ENCODE measurements at regions of chr17 and their contacts with region 1.

Region 1: GRCh38 chr17:79658811-79659207 is 48.0 kb upstream of the RBFOX3 start:
- DNase-seq: peak; percentile 63
- ATAC-seq: peak; percentile 99
- H3K4me3 Mint-ChIP-seq: peak overlapping the region; percentile 31
- H3K27ac Mint-ChIP-seq: no peak overlapping the region
- H3K4me1 Mint-ChIP-seq: peaks cover 31% of the 10 kb centered on the region
- H3K27me3 Mint-ChIP-seq: peaks cover 14% of the 10 kb centered on the region
- CTCF ChIP-seq: peak; percentile 41; the same call in 1 of the 2 replicates

Region 2: GRCh38 chr17:79539944-79540705 is 118.7 kb before region 1 on chr17:
- CTCF ChIA-PET with region 1: no interaction called
- POLR2A ChIA-PET with region 1: no interaction called
- DNase-seq: no peak
- ATAC-seq: no peak
- H3K4me3 Mint-ChIP-seq: no peak overlapping the region
- H3K27ac Mint-ChIP-seq: no peak overlapping the region
- H3K4me1 Mint-ChIP-seq: no peaks in the 10 kb centered on the region
- H3K27me3 Mint-ChIP-seq: peaks cover 2% of the 10 kb centered on the region; the same call in 1 of the 2 replicates
- CTCF ChIP-seq: no peak

Region 3: GRCh38 chr17:79612468-79613194 is 46.2 kb before region 1 on chr17:
- CTCF ChIA-PET with region 1: interaction called, 24 read pairs
- POLR2A ChIA-PET with region 1: no interaction called
- DNase-seq: peak; percentile 93
- ATAC-seq: peak; percentile 40
- H3K4me3 Mint-ChIP-seq: no peak overlapping the region
- H3K27ac Mint-ChIP-seq: no peak overlapping the region
- H3K4me1 Mint-ChIP-seq: peaks cover 12% of the 10 kb centered on the region
- H3K27me3 Mint-ChIP-seq: peaks cover 61% of the 10 kb centered on the region
- CTCF ChIP-seq: peak; percentile 80

Region 4: GRCh38 chr17:79670537-79671084 is 11.8 kb after region 1 on chr17:
- CTCF ChIA-PET with region 1: interaction called, 12 read pairs
- POLR2A ChIA-PET with region 1: no interaction called
- DNase-seq: no peak
- ATAC-seq: no peak
- H3K4me3 Mint-ChIP-seq: no peak overlapping the region
- H3K27ac Mint-ChIP-seq: no peak overlapping the region
- H3K4me1 Mint-ChIP-seq: peaks cover 20% of the 10 kb centered on the region
- H3K27me3 Mint-ChIP-seq: peaks cover 6% of the 10 kb centered on the region
- CTCF ChIP-seq: no peak

Region 5: DNA sequence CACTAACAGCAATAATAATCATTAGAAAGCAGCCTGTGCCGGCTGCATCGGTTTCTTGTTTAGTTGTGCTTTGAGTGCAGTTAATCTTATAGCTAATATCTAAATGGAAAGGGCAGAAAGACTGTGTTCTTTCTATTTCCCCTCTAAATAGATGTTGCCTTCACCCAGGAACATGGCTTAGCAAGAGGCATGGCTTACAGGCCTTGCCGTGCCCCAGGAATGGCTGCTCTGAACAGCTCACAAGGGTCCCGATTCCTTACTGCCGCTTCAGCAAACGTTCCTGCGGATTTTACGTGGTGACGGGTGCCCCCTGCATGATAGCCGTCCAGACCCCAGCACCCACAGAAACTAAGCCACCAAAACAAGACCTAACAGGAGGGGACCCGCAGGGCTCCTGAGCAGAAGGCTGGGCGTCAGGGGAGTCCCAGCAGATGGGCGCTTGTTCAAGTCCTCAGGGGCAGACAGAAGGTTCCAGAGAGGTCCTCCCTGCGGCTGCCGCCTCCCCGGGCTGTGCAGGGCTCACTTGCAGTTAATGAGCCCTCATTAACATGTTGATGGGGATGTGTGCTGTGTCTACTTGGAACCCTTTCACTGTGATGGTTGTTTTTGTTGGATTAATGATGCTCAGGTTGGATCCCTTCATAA is 19.4 kb after region 1 on chr17:
- CTCF ChIA-PET with region 1: interaction called, 10 read pairs
- POLR2A ChIA-PET with region 1: no interaction called
- DNase-seq: no peak
- ATAC-seq: peak; percentile 56
- H3K4me3 Mint-ChIP-seq: no peak overlapping the region
- H3K27ac Mint-ChIP-seq: no peak overlapping the region; the same call in 1 of the 2 replicates
- H3K4me1 Mint-ChIP-seq: peaks cover 5% of the 10 kb centered on the region; the same call in 1 of the 2 replicates
- H3K27me3 Mint-ChIP-seq: peaks cover 4% of the 10 kb centered on the region; the same call in 1 of the 2 replicates
- CTCF ChIP-seq: no peak

Region 6: GRCh38 chr17:79695797-79696609 is 37.2 kb after region 1 on chr17:
- CTCF ChIA-PET with region 1: interaction called, 10 read pairs
- POLR2A ChIA-PET with region 1: no interaction called
- DNase-seq: no peak
- ATAC-seq: no peak
- H3K4me3 Mint-ChIP-seq: no peak overlapping the region
- H3K27ac Mint-ChIP-seq: no peak overlapping the region
- H3K4me1 Mint-ChIP-seq: peaks cover 55% of the 10 kb centered on the region
- H3K27me3 Mint-ChIP-seq: no peaks in the 10 kb centered on the region
- CTCF ChIP-seq: no peak

Region 7: GRCh38 chr17:79826204-79826680 is 167.4 kb after region 1 on chr17:
- CTCF ChIA-PET with region 1: no interaction called
- POLR2A ChIA-PET with region 1: no interaction called
- DNase-seq: no peak
- ATAC-seq: no peak
- H3K4me3 Mint-ChIP-seq: no peak overlapping the region
- H3K27ac Mint-ChIP-seq: no peak overlapping the region
- H3K4me1 Mint-ChIP-seq: peaks cover 19% of the 10 kb centered on the region
- H3K27me3 Mint-ChIP-seq: peaks cover 98% of the 10 kb centered on the region
- CTCF ChIP-seq: no peak

Measured in WTC11 (cell line).